ENCODE measurements at regions of chr15 and their contacts with region 1.

Region 1: GRCh38 chr15:58227706-58228543 is 89.7 kb downstream of the AQP9 start:
- DNase-seq: peak; percentile 41 to 80 (median 56)
- ATAC-seq: peak; percentile 43
- H3K4me3 ChIP-seq: no peak overlapping the region
- H3K4me3 Mint-ChIP-seq: no peak overlapping the region
- H3K27ac ChIP-seq: no peak overlapping the region
- H3K27ac Mint-ChIP-seq: no peak overlapping the region
- H3K4me1 ChIP-seq: peaks cover 5% of the 10 kb centered on the region
- H3K4me1 Mint-ChIP-seq: peaks cover 15% of the 10 kb centered on the region
- H3K27me3 ChIP-seq: no peaks in the 10 kb centered on the region
- H3K27me3 Mint-ChIP-seq: no peaks in the 10 kb centered on the region
- CTCF ChIP-seq: peak; percentile 87

Region 2: GRCh38 chr15:57213862-57214261 is 1014.1 kb before region 1 on chr15:
- CTCF ChIA-PET with region 1: no interaction called
- POLR2A ChIA-PET with region 1: no interaction called
- intact Hi-C with region 1: no loop called
- DNase-seq: peak in 3 of 14 experiments; percentile 38 to 41 (median 40)
- ATAC-seq: no peak
- H3K4me3 ChIP-seq: no peak overlapping the region
- H3K4me3 Mint-ChIP-seq: no peak overlapping the region
- H3K27ac ChIP-seq: no peak overlapping the region
- H3K27ac Mint-ChIP-seq: no peak overlapping the region
- H3K4me1 ChIP-seq: no peaks in the 10 kb centered on the region
- H3K4me1 Mint-ChIP-seq: peaks cover 40% of the 10 kb centered on the region
- H3K27me3 ChIP-seq: no peaks in the 10 kb centered on the region
- H3K27me3 Mint-ChIP-seq: no peaks in the 10 kb centered on the region
- CTCF ChIP-seq: peak; percentile 49

Region 3: DNA sequence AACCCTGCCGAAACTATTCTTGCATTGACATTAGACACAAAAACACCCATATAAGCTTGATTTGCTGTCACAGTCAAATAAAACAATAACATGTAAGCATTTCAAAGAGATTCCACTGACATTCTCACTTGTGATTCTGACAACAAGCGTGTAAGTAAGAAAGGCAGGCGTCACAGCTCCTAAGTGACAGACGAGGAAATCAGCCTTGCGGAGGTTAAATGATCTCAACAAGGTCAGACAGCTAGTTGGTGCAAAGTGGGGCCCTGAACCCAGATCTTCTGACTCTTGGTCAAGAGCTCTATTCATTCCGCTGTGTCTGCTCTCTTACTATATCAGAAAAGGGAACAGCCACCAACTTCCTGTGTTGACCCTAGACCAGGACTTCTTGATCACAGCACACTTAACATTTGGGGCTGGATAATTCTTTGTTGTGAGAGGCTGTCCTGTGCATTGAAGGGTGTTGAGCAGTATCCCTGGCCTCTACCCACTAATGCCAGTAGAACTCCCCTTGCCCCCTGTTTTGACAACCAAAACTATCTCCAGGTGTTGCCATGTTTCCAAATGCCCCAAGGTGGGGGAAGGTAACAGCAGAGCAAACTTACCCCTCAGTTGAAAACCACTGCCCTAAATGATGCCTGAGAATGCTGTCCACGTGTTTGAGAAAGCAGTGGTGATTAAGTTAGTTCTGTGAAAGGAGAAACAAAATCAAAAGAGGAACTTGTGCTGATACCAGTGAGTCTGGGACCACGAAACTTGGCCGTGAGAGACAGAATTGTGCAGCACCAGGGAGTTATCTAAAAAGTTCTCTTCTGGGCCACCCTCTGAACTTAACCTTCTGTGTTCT is 290.0 kb after region 1 on chr15:
- CTCF ChIA-PET with region 1: no interaction called
- POLR2A ChIA-PET with region 1: no interaction called
- intact Hi-C with region 1: loop called in 1 of 2 experiments (anchors 5 kb)
- DNase-seq: peak in 3 of 14 experiments; percentile 22 to 40 (median 38)
- ATAC-seq: peak; percentile 50
- H3K4me3 ChIP-seq: no peak overlapping the region
- H3K4me3 Mint-ChIP-seq: peak overlapping the region; percentile 31
- H3K27ac ChIP-seq: peak overlapping the region; percentile 18 to 48
- H3K27ac Mint-ChIP-seq: peak overlapping the region; percentile 60
- H3K4me1 ChIP-seq: peaks cover 36% of the 10 kb centered on the region
- H3K4me1 Mint-ChIP-seq: peaks cover 56% of the 10 kb centered on the region
- H3K27me3 ChIP-seq: no peaks in the 10 kb centered on the region
- H3K27me3 Mint-ChIP-seq: no peaks in the 10 kb centered on the region
- CTCF ChIP-seq: no peak

Region 4: DNA sequence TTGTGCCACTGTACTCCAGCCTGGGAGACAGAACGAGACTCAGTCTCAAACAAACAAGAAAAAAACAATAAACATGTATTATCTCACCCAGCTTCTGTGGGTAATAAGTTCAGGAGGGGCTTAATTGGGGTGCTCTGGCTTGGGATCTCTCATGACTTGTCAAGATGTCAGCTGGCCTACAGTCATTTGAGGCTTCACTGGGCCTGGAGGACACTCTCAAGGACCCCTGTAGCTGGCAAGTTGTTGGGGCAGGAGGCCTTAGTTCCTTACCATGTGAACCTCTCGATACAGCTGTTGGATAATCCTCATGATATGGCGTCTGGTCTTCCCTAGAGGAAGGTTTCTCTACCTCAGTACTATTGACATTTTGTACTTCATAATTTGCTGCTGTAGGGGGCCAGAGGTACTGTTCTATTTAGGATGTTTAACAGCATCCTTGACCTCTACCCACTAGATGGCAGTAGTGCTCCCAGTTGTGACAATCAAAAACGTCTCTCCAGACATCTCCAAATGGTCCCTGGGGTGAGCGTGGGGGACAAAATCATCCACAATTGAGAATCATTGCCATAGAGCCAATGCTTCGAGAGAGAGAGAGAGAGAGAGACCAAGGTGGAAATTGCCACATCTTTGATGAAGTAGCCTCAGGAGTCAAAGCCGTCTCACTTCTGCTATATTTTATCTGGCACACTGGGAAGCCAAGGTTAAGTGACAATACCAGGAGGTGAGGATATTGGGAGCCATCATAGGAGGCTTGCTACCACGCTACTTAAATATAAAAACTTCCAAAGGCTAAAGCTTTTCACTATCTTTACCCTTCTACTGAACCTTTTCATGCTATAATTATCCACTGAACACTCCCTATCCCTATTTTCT is 729.4 kb after region 1 on chr15:
- CTCF ChIA-PET with region 1: no interaction called
- POLR2A ChIA-PET with region 1: no interaction called
- intact Hi-C with region 1: loop called in 1 of 2 experiments (anchors 5 kb)
- DNase-seq: peak; percentile 10 to 85 (median 40)
- ATAC-seq: peak; percentile 99
- H3K4me3 ChIP-seq: no peak overlapping the region
- H3K4me3 Mint-ChIP-seq: no peak overlapping the region
- H3K27ac ChIP-seq: no peak overlapping the region
- H3K27ac Mint-ChIP-seq: no peak overlapping the region
- H3K4me1 ChIP-seq: peaks cover 8% of the 10 kb centered on the region
- H3K4me1 Mint-ChIP-seq: peaks cover 5% of the 10 kb centered on the region
- H3K27me3 ChIP-seq: no peaks in the 10 kb centered on the region
- H3K27me3 Mint-ChIP-seq: no peaks in the 10 kb centered on the region
- CTCF ChIP-seq: peak; percentile 83

Measured in CD4-positive, alpha-beta T cell (primary cell).